Gastrocnemius medialis (tissue), 4 donors: ENCODE measurements at regions of chr15 and their contacts with region 1.

Region 1: GRCh38 chr15:85858586-85859375 is 64.1 kb upstream of the KLHL25 start:
- DNase-seq: peak; percentile 29 to 54
- ATAC-seq: peak; percentile 84 to 90
- H3K4me3 ChIP-seq: no peak overlapping the region
- H3K27ac ChIP-seq: no peak overlapping the region
- H3K4me1 ChIP-seq: peaks cover 0 to 5% of the 10 kb centered on the region in 2 donors
- H3K27me3 ChIP-seq: no peaks in the 10 kb centered on the region
- CTCF ChIP-seq: peak; percentile 63 to 84 (median 75)
- POLR2A ChIP-seq: no peak

Region 2: GRCh38 chr15:86115144-86115801 is 256.5 kb after region 1 on chr15:
- in situ Hi-C with region 1: loop called in 2 of 4 experiments (anchors 25 kb)
- intact Hi-C with region 1: no loop called
- DNase-seq: no peak
- ATAC-seq: peak; percentile 61 to 63
- H3K4me3 ChIP-seq: no peak overlapping the region
- H3K27ac ChIP-seq: peak overlapping the region in 1 of 4 donors; percentile 13
- H3K4me1 ChIP-seq: peaks cover 7 to 36% of the 10 kb centered on the region in 2 donors
- H3K27me3 ChIP-seq: no peaks in the 10 kb centered on the region
- CTCF ChIP-seq: peak; percentile 28 to 60 (median 46)
- POLR2A ChIP-seq: no peak

Region 3: GRCh38 chr15:86399041-86399954 is 540.5 kb after region 1 on chr15:
- in situ Hi-C with region 1: loop called in 1 of 4 experiments (anchors 25 kb)
- intact Hi-C with region 1: no loop called
- DNase-seq: peak; percentile 44 to 73
- ATAC-seq: peak; percentile 87 to 95
- H3K4me3 ChIP-seq: no peak overlapping the region
- H3K27ac ChIP-seq: peak overlapping the region; percentile 55 to 78 (median 66)
- H3K4me1 ChIP-seq: peaks cover 16 to 34% of the 10 kb centered on the region in 2 donors
- H3K27me3 ChIP-seq: no peaks in the 10 kb centered on the region
- CTCF ChIP-seq: no peak
- POLR2A ChIP-seq: no peak